ENCODE measurements at regions of chr14 and their contacts with region 1.

Region 1: DNA sequence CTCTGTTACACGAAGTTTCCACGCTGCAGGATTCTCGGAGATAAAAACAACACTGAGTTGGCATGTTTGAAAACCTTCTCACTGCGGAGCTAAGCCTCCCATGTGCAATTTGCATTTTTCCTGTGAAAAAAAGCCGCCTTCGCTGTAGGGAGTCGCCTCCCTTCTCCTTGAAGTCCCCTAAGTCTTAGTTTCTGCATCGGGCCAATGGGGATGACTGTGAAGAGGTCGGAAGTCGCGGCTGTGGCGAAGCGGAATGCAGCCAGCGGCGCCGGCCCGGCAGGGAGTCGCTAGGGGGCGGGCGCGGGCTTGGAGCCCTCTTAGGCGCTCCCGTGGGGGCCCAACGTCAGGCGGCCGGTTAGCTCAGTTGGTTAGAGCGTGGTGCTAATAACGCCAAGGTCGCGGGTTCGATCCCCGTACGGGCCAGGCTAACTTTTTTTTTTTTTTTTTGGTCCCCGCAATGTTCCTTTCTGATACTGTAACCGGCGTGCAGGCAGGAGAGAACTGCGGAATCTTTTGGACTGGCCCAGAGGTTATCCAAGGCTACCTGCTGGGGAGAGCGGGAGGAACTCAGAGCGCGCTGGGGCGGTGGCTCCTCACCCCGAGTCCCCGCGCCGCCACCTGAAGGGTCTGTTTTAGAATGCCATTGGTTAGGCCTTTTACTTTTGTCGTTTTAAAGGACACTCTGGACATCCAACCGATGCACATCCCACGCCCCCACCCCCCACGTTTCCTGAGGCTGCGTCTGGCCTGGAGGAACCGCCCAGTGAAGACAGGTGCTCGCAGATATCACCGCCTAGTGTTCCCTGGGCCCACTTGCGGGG is 2.6 kb upstream of the ZNF839 start:
- DNase-seq: peak; percentile 88 to 93 (median 90)
- H3K4me3 ChIP-seq: peak overlapping the region; percentile 72 to 82 (median 77)
- H3K4me3 Mint-ChIP-seq: peak overlapping the region; percentile 88 to 95
- H3K27ac ChIP-seq: peak overlapping the region; percentile 51 to 74
- H3K27ac Mint-ChIP-seq: peak overlapping the region; percentile 73 to 92 (median 89)
- H3K4me1 ChIP-seq: peaks cover 52 to 59% of the 10 kb centered on the region in 2 donors
- H3K4me1 Mint-ChIP-seq: peaks cover 51% of the 10 kb centered on the region
- H3K27me3 ChIP-seq: no peaks in the 10 kb centered on the region
- H3K27me3 Mint-ChIP-seq: peaks cover 3 to 7% (median 4%) of the 10 kb centered on the region in 3 donors
- CTCF ChIP-seq: peak; percentile 93

Region 2: GRCh38 chr14:101964297-101965144 is 352.4 kb before region 1 on chr14 and contains the start of gene DYNC1H1:
- intact Hi-C with region 1: loop called in 1 of 2 experiments (anchors 10 kb)
- DNase-seq: peak; percentile 69 to 91 (median 86)
- H3K4me3 ChIP-seq: peak within 1 kb of the TSS; percentile 65 to 95 (median 93)
- H3K4me3 Mint-ChIP-seq: peak within 1 kb of the TSS; percentile 91 to 94
- H3K27ac ChIP-seq: peak within 1 kb of the TSS; percentile 78 to 85
- H3K27ac Mint-ChIP-seq: peak within 1 kb of the TSS; percentile 88 to 94 (median 92)
- H3K4me1 ChIP-seq: peaks cover 17 to 25% of the 10 kb centered on the region in 2 donors
- H3K4me1 Mint-ChIP-seq: peaks cover 30% of the 10 kb centered on the region
- H3K27me3 ChIP-seq: no peaks in the 10 kb centered on the region
- H3K27me3 Mint-ChIP-seq: peaks cover 2 to 5% (median 3%) of the 10 kb centered on the region in 3 donors
- CTCF ChIP-seq: no peak
- polyA plus RNA-seq, gene DYNC1H1: 14.7 to 87.3 (median 23.6) TPM

Region 3: DNA sequence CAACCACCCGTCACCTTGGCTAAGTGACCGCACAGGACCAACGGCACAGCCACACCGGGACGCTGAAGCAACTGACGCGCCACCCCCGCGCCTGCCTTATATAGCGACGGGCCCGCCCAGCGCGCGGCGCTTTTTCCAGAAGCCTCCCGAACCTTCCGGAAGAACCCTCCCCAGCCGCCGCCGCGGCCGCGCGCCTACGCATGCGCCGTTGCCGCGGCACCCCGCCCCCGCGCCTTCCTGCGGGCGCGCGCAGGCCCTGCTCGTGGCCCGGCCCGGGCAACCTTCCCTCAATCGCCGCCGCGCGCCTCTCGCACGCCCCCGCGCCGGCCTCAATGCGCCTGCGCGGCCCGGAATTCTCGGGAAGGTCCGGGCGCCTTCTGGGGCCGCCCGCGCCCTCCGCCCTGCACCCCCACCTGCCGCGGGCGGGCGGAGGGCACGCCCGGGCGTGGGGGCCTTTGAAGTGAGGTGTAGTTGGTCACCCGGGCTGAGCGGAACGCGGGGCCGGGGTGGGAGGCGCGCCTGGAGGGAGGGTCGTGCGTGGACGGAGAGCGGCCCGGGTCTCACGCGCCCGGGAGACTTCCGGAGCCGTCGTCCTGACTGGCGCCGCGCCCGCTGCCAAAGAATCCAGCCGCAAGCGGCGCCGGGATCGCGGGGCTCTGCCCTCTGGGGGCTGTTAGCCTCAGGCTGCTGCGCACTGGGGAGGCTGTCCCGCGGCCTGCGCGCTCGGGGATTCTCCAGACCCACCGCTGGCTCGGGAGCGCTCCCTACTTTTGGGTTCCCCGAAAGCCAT is 229.8 kb before region 1 on chr14 and contains the start of gene HSP90AA1:
- intact Hi-C with region 1: loop called in 1 of 2 experiments (anchors 5 kb)
- DNase-seq: peak; percentile 89 to 93 (median 92)
- H3K4me3 ChIP-seq: peak within 1 kb of the TSS; percentile 68 to 88 (median 69)
- H3K4me3 Mint-ChIP-seq: peak within 1 kb of the TSS; percentile 94 to 95
- H3K27ac ChIP-seq: peak within 1 kb of the TSS; percentile 83 to 91
- H3K27ac Mint-ChIP-seq: peak within 1 kb of the TSS; percentile 89 to 97 (median 95)
- H3K4me1 ChIP-seq: peaks cover 25 to 47% of the 10 kb centered on the region in 2 donors
- H3K4me1 Mint-ChIP-seq: peaks cover 54% of the 10 kb centered on the region
- H3K27me3 ChIP-seq: no peaks in the 10 kb centered on the region
- H3K27me3 Mint-ChIP-seq: peaks cover 4 to 6% (median 5%) of the 10 kb centered on the region in 3 donors
- CTCF ChIP-seq: no peak
- polyA plus RNA-seq, gene HSP90AA1: 149 to 211 (median 180) TPM

Region 4: GRCh38 chr14:102139248-102140026 is 177.5 kb before region 1 on chr14 and contains the start of gene WDR20:
- intact Hi-C with region 1: loop called (anchors 10 kb)
- DNase-seq: peak; percentile 92 to 94 (median 93)
- H3K4me3 ChIP-seq: peak within 1 kb of the TSS; percentile 85 to 98 (median 98)
- H3K4me3 Mint-ChIP-seq: peak within 1 kb of the TSS; percentile 96 to 99
- H3K27ac ChIP-seq: peak within 1 kb of the TSS; percentile 66 to 92
- H3K27ac Mint-ChIP-seq: peak within 1 kb of the TSS; percentile 88 to 98 (median 96)
- H3K4me1 ChIP-seq: peaks cover 16 to 26% of the 10 kb centered on the region in 2 donors
- H3K4me1 Mint-ChIP-seq: peaks cover 19% of the 10 kb centered on the region
- H3K27me3 ChIP-seq: peaks cover 0 to 5% of the 10 kb centered on the region in 2 donors
- H3K27me3 Mint-ChIP-seq: peaks cover 4 to 17% (median 11%) of the 10 kb centered on the region in 3 donors
- CTCF ChIP-seq: no peak
- polyA plus RNA-seq, gene WDR20: 7.4 to 13.3 (median 9.0) TPM

Region 5: GRCh38 chr14:102235275-102235897 is 81.6 kb before region 1 on chr14:
- intact Hi-C with region 1: loop called (anchors 2 kb)
- DNase-seq: peak; percentile 39 to 63 (median 57)
- H3K4me3 ChIP-seq: peak overlapping the region; percentile 30 to 70 (median 37)
- H3K4me3 Mint-ChIP-seq: no peak overlapping the region
- H3K27ac ChIP-seq: no peak overlapping the region
- H3K27ac Mint-ChIP-seq: no peak overlapping the region
- H3K4me1 ChIP-seq: no peaks in the 10 kb centered on the region
- H3K4me1 Mint-ChIP-seq: no peaks in the 10 kb centered on the region
- H3K27me3 ChIP-seq: no peaks in the 10 kb centered on the region
- H3K27me3 Mint-ChIP-seq: no peaks in the 10 kb centered on the region
- CTCF ChIP-seq: peak; percentile 80

Region 6: GRCh38 chr14:102362545-102363181 is 45.7 kb after region 1 on chr14 and contains the starts of genes CINP and TECPR2:
- intact Hi-C with region 1: loop called in 1 of 2 experiments (anchors 5 kb)
- DNase-seq: peak; percentile 94
- H3K4me3 ChIP-seq: peak within 1 kb of the TSS; percentile 90 to 95 (median 94)
- H3K4me3 Mint-ChIP-seq: peak within 1 kb of the TSS; percentile 94 to 96
- H3K27ac ChIP-seq: peak within 1 kb of the TSS; percentile 92 to 100
- H3K27ac Mint-ChIP-seq: peak within 1 kb of the TSS in 6 of 7 donors; percentile 96 to 99 (median 98)
- H3K4me1 ChIP-seq: peaks cover 22 to 31% of the 10 kb centered on the region in 2 donors
- H3K4me1 Mint-ChIP-seq: peaks cover 15% of the 10 kb centered on the region
- H3K27me3 ChIP-seq: no peaks in the 10 kb centered on the region
- H3K27me3 Mint-ChIP-seq: peaks cover 0 to 2% (median 0%) of the 10 kb centered on the region in 3 donors
- CTCF ChIP-seq: no peak
- polyA plus RNA-seq, gene CINP: 28.9 to 58.5 (median 57.1) TPM
- polyA plus RNA-seq, gene TECPR2: 2.8 to 10.4 (median 6.4) TPM

Region 7: GRCh38 chr14:102430212-102430908 is 113.4 kb after region 1 on chr14:
- intact Hi-C with region 1: no loop called
- DNase-seq: no peak
- H3K4me3 ChIP-seq: no peak overlapping the region
- H3K4me3 Mint-ChIP-seq: no peak overlapping the region
- H3K27ac ChIP-seq: no peak overlapping the region
- H3K27ac Mint-ChIP-seq: no peak overlapping the region
- H3K4me1 ChIP-seq: no peaks in the 10 kb centered on the region
- H3K4me1 Mint-ChIP-seq: no peaks in the 10 kb centered on the region
- H3K27me3 ChIP-seq: no peaks in the 10 kb centered on the region
- H3K27me3 Mint-ChIP-seq: no peaks in the 10 kb centered on the region
- CTCF ChIP-seq: no peak

Region 8: DNA sequence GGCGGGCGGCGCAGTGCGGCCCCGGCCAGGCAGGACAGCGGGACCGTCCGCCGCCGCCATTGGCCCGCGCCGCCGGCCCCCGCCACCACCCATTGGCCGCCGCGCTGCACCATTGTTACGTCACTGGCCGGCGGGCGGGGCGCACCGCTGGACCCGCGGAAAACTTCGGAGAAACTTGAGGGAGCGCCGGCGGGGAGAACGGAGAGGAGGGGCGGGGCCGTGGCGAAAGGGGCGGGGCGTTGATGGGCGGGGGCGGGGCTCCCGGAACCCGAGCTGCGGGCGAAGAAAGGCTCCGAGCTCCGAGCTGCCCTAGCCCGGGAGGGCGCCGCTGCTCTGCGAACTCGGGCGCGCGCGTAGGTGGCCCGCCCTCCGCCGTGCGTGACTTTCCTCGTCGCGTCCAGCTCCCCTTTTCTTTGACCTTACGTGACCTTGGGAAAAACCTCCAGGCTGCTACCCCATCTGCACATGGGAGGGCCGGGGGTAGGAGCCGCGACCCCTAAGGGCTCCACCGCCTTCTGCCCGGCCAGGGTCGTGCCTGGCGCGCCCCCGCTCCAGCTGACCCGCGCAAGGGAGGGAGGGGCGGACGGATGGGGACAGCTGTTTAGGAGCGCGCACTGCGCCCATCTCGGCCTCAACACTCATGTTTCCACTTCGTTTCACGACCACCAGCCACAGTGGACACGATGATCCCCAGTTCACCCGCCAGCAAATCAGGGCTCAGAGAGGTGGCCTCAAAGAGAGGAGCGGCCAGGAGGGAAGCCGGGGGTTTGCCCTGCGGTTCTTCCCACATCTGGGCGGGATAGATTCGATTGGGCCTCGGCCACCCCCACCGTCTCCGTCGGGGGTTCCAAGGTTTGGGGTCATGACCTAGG is 193.0 kb after region 1 on chr14 and contains the start of gene ANKRD9:
- intact Hi-C with region 1: loop called in 1 of 2 experiments (anchors 5 kb)
- DNase-seq: peak; percentile 88 to 94 (median 94)
- H3K4me3 ChIP-seq: peak within 1 kb of the TSS; percentile 56 to 83 (median 57)
- H3K4me3 Mint-ChIP-seq: peak within 1 kb of the TSS; percentile 84 to 93
- H3K27ac ChIP-seq: peak within 1 kb of the TSS in 1 of 2 donors; percentile 70
- H3K27ac Mint-ChIP-seq: peak within 1 kb of the TSS; percentile 79 to 92 (median 84)
- H3K4me1 ChIP-seq: peaks cover 16 to 19% of the 10 kb centered on the region in 2 donors
- H3K4me1 Mint-ChIP-seq: peaks cover 19% of the 10 kb centered on the region
- H3K27me3 ChIP-seq: peaks cover 0 to 4% of the 10 kb centered on the region in 2 donors
- H3K27me3 Mint-ChIP-seq: peaks cover 4 to 13% (median 4%) of the 10 kb centered on the region in 3 donors
- CTCF ChIP-seq: no peak
- polyA plus RNA-seq, gene ANKRD9: 0.43 to 10.8 (median 0.83) TPM

Measured in CD14-positive monocyte (primary cell).